ENCODE measurements at regions of chr2 and their contacts with region 1.

Region 1: DNA sequence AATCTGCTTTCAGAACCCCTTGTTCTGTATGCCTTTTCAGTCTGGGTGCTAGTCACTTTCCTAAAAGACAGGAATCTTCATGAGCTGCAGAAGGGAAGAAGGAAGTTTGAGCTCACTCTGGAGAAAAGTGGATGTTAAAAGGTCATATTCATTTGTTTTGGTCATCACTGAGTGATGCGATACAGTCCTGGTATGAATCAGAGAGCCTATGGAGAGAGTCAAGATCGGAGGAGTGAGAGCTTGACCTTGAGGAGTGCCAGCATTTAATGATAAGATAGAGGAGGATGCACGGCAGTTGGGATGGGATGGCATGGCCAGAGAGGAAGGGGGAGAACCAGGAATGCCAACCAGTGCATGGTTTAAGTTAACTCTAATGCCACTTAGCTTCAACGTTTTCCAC is 19.6 kb downstream of the USP39 start:
- DNase-seq: no peak
- H3K4me3 Mint-ChIP-seq: no peak overlapping the region
- H3K27ac Mint-ChIP-seq: no peak overlapping the region
- H3K4me1 Mint-ChIP-seq: peaks cover 9% of the 10 kb centered on the region
- H3K27me3 Mint-ChIP-seq: no peaks in the 10 kb centered on the region

Region 2: GRCh38 chr2:85619617-85620016 is 16.0 kb before region 1 on chr2:
- CTCF ChIA-PET with region 1: interaction called, 56 read pairs
- POLR2A ChIA-PET with region 1: interaction called, 6 read pairs
- DNase-seq: no peak
- H3K4me3 Mint-ChIP-seq: no peak overlapping the region
- H3K27ac Mint-ChIP-seq: no peak overlapping the region
- H3K4me1 Mint-ChIP-seq: peaks cover 32% of the 10 kb centered on the region
- H3K27me3 Mint-ChIP-seq: no peaks in the 10 kb centered on the region

Region 3: GRCh38 chr2:85653996-85654395 is 18.4 kb after region 1 on chr2:
- CTCF ChIA-PET with region 1: interaction called, 16 read pairs
- POLR2A ChIA-PET with region 1: no interaction called
- DNase-seq: no peak
- H3K4me3 Mint-ChIP-seq: no peak overlapping the region
- H3K27ac Mint-ChIP-seq: peak overlapping the region; percentile 20
- H3K4me1 Mint-ChIP-seq: no peaks in the 10 kb centered on the region
- H3K27me3 Mint-ChIP-seq: no peaks in the 10 kb centered on the region